ENCODE measurements at regions of chr2 and their contacts with region 1.

Region 1: DNA sequence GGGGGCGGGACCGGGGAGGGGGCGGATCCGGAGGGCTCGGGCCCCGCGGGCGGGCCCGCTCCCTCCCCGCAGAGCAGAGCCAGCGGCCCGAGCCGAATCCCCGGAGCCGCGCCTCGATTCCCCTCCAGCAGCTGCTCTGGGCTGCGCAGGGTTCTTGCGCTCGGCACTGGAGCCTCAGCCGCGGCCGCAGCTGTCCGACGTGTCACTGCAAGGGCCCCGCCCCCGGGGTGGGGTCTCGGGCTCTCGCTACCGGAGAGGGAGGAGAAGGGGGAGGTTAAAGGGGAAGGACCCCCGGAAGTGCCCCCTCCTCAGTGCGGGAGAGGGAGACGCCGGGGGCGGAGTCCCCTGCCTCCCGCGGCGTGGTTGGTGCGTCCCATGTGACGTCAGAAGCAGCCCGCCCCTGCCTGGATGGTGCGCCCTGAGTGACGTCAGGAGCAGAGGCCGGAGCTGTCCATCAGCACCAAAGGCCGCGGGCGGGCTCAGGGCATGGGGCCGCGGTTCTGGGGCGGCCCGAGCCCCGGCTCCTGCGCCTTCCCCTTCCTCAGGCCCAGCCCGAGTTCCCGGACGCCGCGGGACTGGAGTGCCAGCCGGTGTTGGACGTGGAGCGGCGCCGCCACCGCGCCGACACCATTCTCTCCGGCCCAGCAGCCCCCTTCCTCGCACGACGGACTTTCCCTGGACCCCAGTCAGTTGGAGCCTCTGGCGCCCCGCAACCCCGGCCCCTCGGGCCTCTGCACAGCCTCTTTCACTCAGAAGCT is at the starts of genes CHPF and TMEM198:
- DNase-seq: peak; percentile 79 to 94 (median 88)
- ATAC-seq: peak; percentile 86
- H3K4me3 ChIP-seq: peak within 1 kb of the TSS; percentile 51
- H3K4me3 Mint-ChIP-seq: peak within 1 kb of the TSS; percentile 83 to 95 (median 90)
- H3K27ac ChIP-seq: peak within 1 kb of the TSS; percentile 78
- H3K27ac Mint-ChIP-seq: peak within 1 kb of the TSS; percentile 71 to 90 (median 78)
- H3K4me1 ChIP-seq: peaks cover 10 to 12% of the 10 kb centered on the region in 2 donors
- H3K4me1 Mint-ChIP-seq: peaks cover 18 to 30% (median 25%) of the 10 kb centered on the region in 7 donors
- H3K27me3 ChIP-seq: no peaks in the 10 kb centered on the region
- H3K27me3 Mint-ChIP-seq: peaks cover 0 to 18% (median 11%) of the 10 kb centered on the region in 5 donors
- total RNA-seq, gene CHPF: 4.3 to 15.3 (median 5.7) TPM
- total RNA-seq, gene TMEM198: 0.45 to 0.69 (median 0.50) TPM in 4 of 5 experiments, not detected in the other

Region 2: DNA sequence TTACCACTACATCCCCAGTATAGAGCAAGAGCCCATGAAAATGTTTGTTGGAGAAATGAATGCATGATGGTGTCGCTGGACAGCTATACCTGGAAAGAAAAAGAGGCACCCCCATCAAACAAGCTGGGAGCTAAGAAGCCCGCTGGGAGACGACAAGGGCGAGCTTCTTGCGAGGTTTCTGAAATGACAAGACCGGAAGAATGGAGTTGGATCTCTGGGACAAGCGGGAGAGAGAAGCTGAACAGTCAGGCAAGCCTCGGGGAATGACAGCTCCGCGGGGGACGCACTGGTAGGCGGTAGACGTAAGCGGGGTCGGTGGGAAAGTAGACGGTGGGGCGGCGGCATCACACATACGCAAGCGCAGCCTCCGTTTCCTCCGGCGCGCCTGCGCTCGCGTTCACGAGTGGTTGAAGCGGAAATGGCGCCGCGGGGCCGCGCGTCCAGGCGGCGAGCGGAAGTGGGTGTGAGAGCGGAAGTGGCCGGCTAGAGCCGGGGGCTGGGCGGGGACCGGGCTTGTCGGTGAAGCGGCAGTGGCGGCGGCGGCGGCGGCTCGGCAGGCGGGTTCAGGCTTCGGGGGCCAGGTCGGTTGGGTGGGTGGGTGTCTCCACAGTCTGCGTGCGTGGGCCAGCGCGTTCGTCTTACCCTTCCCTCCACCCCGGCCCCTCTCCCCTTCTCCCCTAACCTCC is 1327.0 kb before region 1 on chr2 and contains the start of gene ARPC2:
- CTCF ChIA-PET with region 1: no interaction called
- POLR2A ChIA-PET with region 1: no interaction called
- intact Hi-C with region 1: loop called in 1 of 2 experiments (anchors 2 kb)
- DNase-seq: peak; percentile 91 to 97 (median 95)
- ATAC-seq: peak; percentile 90
- H3K4me3 ChIP-seq: peak within 1 kb of the TSS; percentile 90
- H3K4me3 Mint-ChIP-seq: peak within 1 kb of the TSS; percentile 90 to 97 (median 94)
- H3K27ac ChIP-seq: peak within 1 kb of the TSS; percentile 99
- H3K27ac Mint-ChIP-seq: peak within 1 kb of the TSS; percentile 94 to 98 (median 97)
- H3K4me1 ChIP-seq: peaks cover 25 to 33% of the 10 kb centered on the region in 2 donors
- H3K4me1 Mint-ChIP-seq: peaks cover 31 to 48% (median 42%) of the 10 kb centered on the region in 7 donors
- H3K27me3 ChIP-seq: no peaks in the 10 kb centered on the region
- H3K27me3 Mint-ChIP-seq: peaks cover 0 to 6% (median 0%) of the 10 kb centered on the region in 5 donors
- total RNA-seq, gene ARPC2: 330 to 694 (median 368) TPM

Region 3: GRCh38 chr2:218876562-218877219 is 667.1 kb before region 1 on chr2:
- CTCF ChIA-PET with region 1: no interaction called
- POLR2A ChIA-PET with region 1: no interaction called
- intact Hi-C with region 1: loop called in 1 of 2 experiments (anchors 2 kb)
- DNase-seq: peak in 8 of 9 donors; percentile 53 to 85 (median 74)
- ATAC-seq: peak; percentile 24
- H3K4me3 ChIP-seq: no peak overlapping the region
- H3K4me3 Mint-ChIP-seq: peak overlapping the region in 3 of 10 donors; percentile 1 to 19 (median 3)
- H3K27ac ChIP-seq: no peak overlapping the region
- H3K27ac Mint-ChIP-seq: peak overlapping the region in 3 of 9 donors; percentile 48 to 53 (median 52)
- H3K4me1 ChIP-seq: peaks cover 26 to 42% of the 10 kb centered on the region in 2 donors
- H3K4me1 Mint-ChIP-seq: peaks cover 24 to 53% (median 43%) of the 10 kb centered on the region in 7 donors
- H3K27me3 ChIP-seq: peaks cover 8 to 18% of the 10 kb centered on the region in 2 donors
- H3K27me3 Mint-ChIP-seq: peaks cover 18 to 77% (median 29%) of the 10 kb centered on the region in 5 donors

Region 4: GRCh38 chr2:219206442-219207253 is 337.1 kb before region 1 on chr2 and contains the start of gene ZFAND2B:
- CTCF ChIA-PET with region 1: no interaction called
- POLR2A ChIA-PET with region 1: interaction called, 3 read pairs
- intact Hi-C with region 1: loop called in 1 of 2 experiments (anchors 5 kb)
- DNase-seq: peak; percentile 92 to 98 (median 96)
- ATAC-seq: peak; percentile 96
- H3K4me3 ChIP-seq: peak within 1 kb of the TSS; percentile 98
- H3K4me3 Mint-ChIP-seq: peak within 1 kb of the TSS; percentile 77 to 98 (median 94)
- H3K27ac ChIP-seq: peak within 1 kb of the TSS; percentile 92
- H3K27ac Mint-ChIP-seq: peak within 1 kb of the TSS; percentile 96 to 99 (median 97)
- H3K4me1 ChIP-seq: peaks cover 20 to 28% of the 10 kb centered on the region in 2 donors
- H3K4me1 Mint-ChIP-seq: peaks cover 15 to 48% (median 43%) of the 10 kb centered on the region in 7 donors
- H3K27me3 ChIP-seq: no peaks in the 10 kb centered on the region
- H3K27me3 Mint-ChIP-seq: no peaks in the 10 kb centered on the region
- total RNA-seq, gene ZFAND2B: 50.1 to 79.5 (median 71.3) TPM

Region 5: DNA sequence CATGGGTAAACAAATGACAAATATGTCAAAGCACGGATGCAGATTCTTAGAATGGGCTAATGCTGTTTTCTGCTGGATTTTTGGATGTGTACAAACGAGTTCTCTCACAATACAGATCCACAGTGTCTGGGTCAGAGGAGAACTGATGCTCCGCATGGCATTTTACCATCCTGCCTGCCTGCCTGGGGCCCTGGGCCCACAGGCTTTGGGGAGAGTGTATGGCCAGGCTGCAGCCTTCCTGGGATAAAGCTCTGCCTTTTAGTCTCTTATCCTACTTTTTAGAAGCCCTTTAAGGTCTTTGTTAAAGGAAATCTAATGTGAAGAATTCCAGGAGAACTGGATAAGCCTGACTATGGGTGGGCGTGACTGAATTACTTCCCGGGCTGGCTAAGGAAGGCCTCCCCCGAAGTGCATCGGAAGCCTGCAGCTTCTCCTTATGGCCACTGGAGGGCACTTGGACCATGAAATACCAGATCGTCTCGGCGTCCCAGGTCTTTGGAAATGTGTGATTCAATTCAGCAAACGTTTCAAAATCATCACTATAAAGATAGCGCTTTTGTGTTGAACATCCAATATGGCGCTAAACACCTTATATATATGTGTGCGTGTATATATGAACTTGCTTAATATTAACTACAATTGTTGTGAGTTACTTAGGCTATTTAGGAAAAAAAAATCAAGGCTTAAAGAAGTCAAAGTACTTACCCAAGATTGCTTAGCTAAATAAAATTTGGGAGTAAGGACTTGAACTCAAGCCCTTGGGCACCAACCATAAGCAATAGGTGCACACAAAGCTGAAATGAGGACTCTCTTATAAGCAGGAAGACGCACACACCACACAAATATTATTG is 140.9 kb before region 1 on chr2:
- CTCF ChIA-PET with region 1: interaction called, 12 read pairs
- POLR2A ChIA-PET with region 1: no interaction called
- intact Hi-C with region 1: no loop called
- DNase-seq: peak in 8 of 9 donors; percentile 37 to 70 (median 62)
- ATAC-seq: peak; percentile 89
- H3K4me3 ChIP-seq: no peak overlapping the region
- H3K4me3 Mint-ChIP-seq: no peak overlapping the region
- H3K27ac ChIP-seq: no peak overlapping the region
- H3K27ac Mint-ChIP-seq: no peak overlapping the region
- H3K4me1 ChIP-seq: peaks cover 0 to 3% of the 10 kb centered on the region in 2 donors
- H3K4me1 Mint-ChIP-seq: peaks cover 0 to 9% (median 5%) of the 10 kb centered on the region in 7 donors
- H3K27me3 ChIP-seq: no peaks in the 10 kb centered on the region
- H3K27me3 Mint-ChIP-seq: peaks cover 0 to 13% (median 7%) of the 10 kb centered on the region in 5 donors

Region 6: GRCh38 chr2:219597552-219598307 is 54.0 kb after region 1 on chr2 and contains the start of gene STK11IP:
- CTCF ChIA-PET with region 1: interaction called, 9 read pairs
- POLR2A ChIA-PET with region 1: no interaction called
- intact Hi-C with region 1: loop called (anchors 1 kb)
- DNase-seq: peak; percentile 76 to 91 (median 87)
- ATAC-seq: peak; percentile 91
- H3K4me3 ChIP-seq: peak within 1 kb of the TSS; percentile 86
- H3K4me3 Mint-ChIP-seq: peak within 1 kb of the TSS; percentile 89 to 99 (median 96)
- H3K27ac ChIP-seq: peak within 1 kb of the TSS; percentile 80
- H3K27ac Mint-ChIP-seq: peak within 1 kb of the TSS; percentile 93 to 98 (median 94)
- H3K4me1 ChIP-seq: peaks cover 5 to 15% of the 10 kb centered on the region in 2 donors
- H3K4me1 Mint-ChIP-seq: peaks cover 14 to 30% (median 21%) of the 10 kb centered on the region in 7 donors
- H3K27me3 ChIP-seq: no peaks in the 10 kb centered on the region
- H3K27me3 Mint-ChIP-seq: peaks cover 3 to 10% (median 6%) of the 10 kb centered on the region in 5 donors
- total RNA-seq, gene STK11IP: 33.6 to 46.4 (median 42.6) TPM